ENCODE measurements at regions of chr12 and their contacts with region 1.

Region 1: DNA sequence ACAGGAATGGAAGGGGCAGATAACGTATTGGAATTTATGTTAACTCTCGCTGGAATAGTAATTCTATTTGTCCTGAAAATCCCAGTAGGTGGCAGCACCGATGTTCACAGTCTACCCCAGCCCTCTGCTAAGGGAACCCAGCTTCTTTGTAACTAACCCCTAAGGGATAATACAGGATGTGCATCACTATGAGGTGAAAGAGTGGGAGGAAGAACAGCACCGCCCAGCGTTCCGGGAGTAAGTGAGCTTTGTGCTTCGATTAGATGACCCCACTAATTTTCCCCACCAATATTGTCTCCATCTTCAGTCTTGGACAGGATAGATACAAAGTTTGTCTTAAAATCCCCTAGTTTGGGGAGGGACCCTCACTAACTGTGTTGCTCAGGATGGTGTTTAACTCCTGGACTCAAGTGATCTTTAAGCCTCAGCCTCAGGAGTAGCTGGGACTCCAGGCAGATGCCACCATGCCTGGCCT is 2.7 kb downstream of the SLC2A3 start:
- DNase-seq: peak; percentile 92
- H3K4me3 ChIP-seq: peak overlapping the region; percentile 53 to 64 (median 58)
- H3K27ac ChIP-seq: peak overlapping the region; percentile 74 to 84 (median 83)
- H3K4me1 ChIP-seq: peaks cover 10 to 37% (median 29%) of the 10 kb centered on the region in 4 donors
- H3K27me3 ChIP-seq: no peaks in the 10 kb centered on the region
- CTCF ChIP-seq: peak; percentile 70 to 87 (median 71)
- EP300 ChIP-seq: no peak
- POLR2A ChIP-seq: no peak

Region 2: DNA sequence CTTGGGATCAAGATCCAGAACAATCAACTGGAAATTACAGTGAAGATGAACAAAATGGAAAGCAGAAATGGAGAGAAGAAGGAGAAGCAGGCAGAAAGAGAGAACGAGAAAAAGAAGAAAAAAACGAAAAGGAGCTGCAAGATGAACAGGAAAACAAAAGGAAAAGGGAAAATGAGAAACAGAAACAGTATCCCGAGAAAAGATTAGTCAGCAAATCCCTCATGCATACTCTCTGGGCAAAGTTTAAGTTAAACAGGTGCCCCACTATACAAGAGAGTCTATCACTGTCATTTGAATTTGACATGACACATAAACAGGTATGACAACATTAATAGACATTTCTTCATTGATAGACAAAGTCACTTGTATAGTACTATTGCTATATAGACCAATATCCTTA is 163.3 kb before region 1 on chr12:
- intact Hi-C with region 1: no loop called
- DNase-seq: no peak
- H3K4me3 ChIP-seq: no peak overlapping the region
- H3K27ac ChIP-seq: no peak overlapping the region
- H3K4me1 ChIP-seq: no peaks in the 10 kb centered on the region
- H3K27me3 ChIP-seq: no peaks in the 10 kb centered on the region
- CTCF ChIP-seq: no peak
- EP300 ChIP-seq: no peak
- POLR2A ChIP-seq: no peak

Region 3: GRCh38 chr12:7869127-7869526 is 64.2 kb before region 1 on chr12:
- intact Hi-C with region 1: loop called (anchors 10 kb)
- DNase-seq: no peak
- H3K4me3 ChIP-seq: no peak overlapping the region
- H3K27ac ChIP-seq: no peak overlapping the region
- H3K4me1 ChIP-seq: peaks cover 5 to 10% (median 8%) of the 10 kb centered on the region in 4 donors
- H3K27me3 ChIP-seq: peaks cover 0 to 31% (median 5%) of the 10 kb centered on the region in 4 donors
- CTCF ChIP-seq: no peak
- EP300 ChIP-seq: no peak
- POLR2A ChIP-seq: no peak

Region 4: GRCh38 chr12:7966563-7966962 is 33.3 kb after region 1 on chr12:
- intact Hi-C with region 1: loop called (anchors 5 kb)
- DNase-seq: no peak
- H3K4me3 ChIP-seq: no peak overlapping the region
- H3K27ac ChIP-seq: no peak overlapping the region
- H3K4me1 ChIP-seq: peaks cover 15 to 24% (median 20%) of the 10 kb centered on the region in 4 donors
- H3K27me3 ChIP-seq: no peaks in the 10 kb centered on the region
- CTCF ChIP-seq: no peak
- EP300 ChIP-seq: no peak
- POLR2A ChIP-seq: no peak

Region 5: DNA sequence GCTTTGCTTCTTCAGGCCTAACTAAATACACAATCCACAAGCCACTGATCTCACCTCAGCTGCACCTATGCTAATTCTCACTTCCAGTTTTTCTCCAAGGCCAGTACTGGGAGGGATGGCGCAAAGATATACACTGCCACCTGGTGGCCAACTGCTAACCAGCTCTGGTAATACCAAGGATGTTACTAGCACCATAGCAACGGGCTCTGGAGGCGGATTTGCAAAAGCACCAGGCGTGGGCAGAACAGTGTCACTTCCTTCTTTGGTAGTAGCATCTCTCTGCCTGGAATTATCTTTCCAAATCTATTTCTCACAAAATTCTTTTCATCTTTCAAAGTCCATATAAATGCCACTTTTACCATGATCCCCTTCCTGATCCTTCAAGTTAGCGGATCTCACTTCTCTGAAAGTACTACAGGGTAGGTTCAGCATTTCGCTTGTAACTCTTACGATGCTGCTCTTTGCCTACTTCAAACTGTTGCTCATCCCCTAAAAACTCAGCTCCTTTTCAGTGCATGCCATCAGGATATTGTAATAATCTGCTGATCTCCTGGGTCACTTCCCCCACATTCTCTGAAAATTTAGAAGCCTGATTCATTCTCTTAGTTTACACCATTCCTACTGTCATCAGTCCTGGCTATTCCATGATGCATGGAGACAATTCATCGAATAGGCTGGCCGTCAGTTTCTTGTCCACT is 62.1 kb after region 1 on chr12:
- intact Hi-C with region 1: loop called (anchors 1 kb)
- DNase-seq: peak; percentile 95
- H3K4me3 ChIP-seq: no peak overlapping the region
- H3K27ac ChIP-seq: peak overlapping the region; percentile 42 to 69 (median 49)
- H3K4me1 ChIP-seq: no peaks in the 10 kb centered on the region
- H3K27me3 ChIP-seq: no peaks in the 10 kb centered on the region
- CTCF ChIP-seq: peak; percentile 78 to 81 (median 81)
- EP300 ChIP-seq: no peak
- POLR2A ChIP-seq: no peak

Region 6: GRCh38 chr12:8045952-8046944 is 113.0 kb after region 1 on chr12:
- intact Hi-C with region 1: no loop called
- DNase-seq: no peak
- H3K4me3 ChIP-seq: no peak overlapping the region
- H3K27ac ChIP-seq: no peak overlapping the region
- H3K4me1 ChIP-seq: peaks cover 0 to 8% (median 2%) of the 10 kb centered on the region in 4 donors
- H3K27me3 ChIP-seq: no peaks in the 10 kb centered on the region
- CTCF ChIP-seq: peak; percentile 74 to 89 (median 79)
- EP300 ChIP-seq: no peak
- POLR2A ChIP-seq: no peak

Region 7: DNA sequence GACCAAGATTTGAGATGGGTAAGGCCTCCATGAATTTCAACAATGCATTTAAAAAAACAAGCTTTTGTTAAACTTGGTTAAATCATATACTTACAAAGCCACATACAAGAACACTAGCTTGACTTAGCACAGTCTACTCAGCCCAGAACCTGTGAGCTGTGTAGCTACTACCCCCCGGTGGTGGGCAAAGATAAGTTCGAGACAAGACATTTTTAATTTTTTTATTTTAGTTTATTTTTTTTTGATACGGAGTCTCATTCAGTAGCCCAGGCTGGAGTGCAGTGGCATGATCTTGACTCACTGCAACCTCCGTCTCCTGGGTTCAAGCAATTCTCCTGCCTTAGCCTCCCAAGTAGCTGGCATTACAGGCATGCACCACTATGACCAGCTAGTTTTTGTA is 145.1 kb after region 1 on chr12:
- intact Hi-C with region 1: loop called (anchors 10 kb)
- DNase-seq: no peak
- H3K4me3 ChIP-seq: no peak overlapping the region
- H3K27ac ChIP-seq: no peak overlapping the region
- H3K4me1 ChIP-seq: peaks cover 12 to 18% (median 15%) of the 10 kb centered on the region in 4 donors
- H3K27me3 ChIP-seq: no peaks in the 10 kb centered on the region
- CTCF ChIP-seq: peak in 1 of 3 experiments; percentile 20
- EP300 ChIP-seq: no peak
- POLR2A ChIP-seq: no peak

Measured in esophagus muscularis mucosa (tissue), 4 donors.